Activated CD4-positive, alpha-beta memory T cell treated with anti-CD3 and anti-CD28 coated beads for 36 hours (primary cell): ENCODE measurements at regions of chr15 and their contacts with region 1.

Region 1: DNA sequence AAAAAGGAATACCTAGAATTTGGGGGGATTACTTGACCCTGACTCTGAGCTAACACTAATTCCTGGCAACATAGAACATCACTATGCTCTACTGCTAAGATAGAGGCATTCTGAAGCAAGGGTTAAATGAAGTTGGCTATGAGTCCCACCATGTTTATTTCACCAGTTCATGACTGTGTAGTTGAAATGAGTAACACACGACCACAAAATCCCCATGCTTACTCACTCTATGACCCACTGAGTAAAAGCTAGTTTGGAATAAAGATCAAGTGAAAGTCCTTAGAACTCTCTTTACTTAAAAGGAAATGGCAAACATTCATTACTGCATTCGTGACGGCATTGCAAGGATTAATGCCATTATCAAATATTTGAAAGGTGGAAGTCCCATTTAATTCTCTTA is 47.4 kb downstream of the MRPL46 start:
- DNase-seq: no peak
- H3K4me3 Mint-ChIP-seq: no peak overlapping the region
- H3K27ac Mint-ChIP-seq: no peak overlapping the region
- H3K4me1 Mint-ChIP-seq: peaks cover 16% of the 10 kb centered on the region
- H3K27me3 Mint-ChIP-seq: peaks cover 49% of the 10 kb centered on the region

Region 2: DNA sequence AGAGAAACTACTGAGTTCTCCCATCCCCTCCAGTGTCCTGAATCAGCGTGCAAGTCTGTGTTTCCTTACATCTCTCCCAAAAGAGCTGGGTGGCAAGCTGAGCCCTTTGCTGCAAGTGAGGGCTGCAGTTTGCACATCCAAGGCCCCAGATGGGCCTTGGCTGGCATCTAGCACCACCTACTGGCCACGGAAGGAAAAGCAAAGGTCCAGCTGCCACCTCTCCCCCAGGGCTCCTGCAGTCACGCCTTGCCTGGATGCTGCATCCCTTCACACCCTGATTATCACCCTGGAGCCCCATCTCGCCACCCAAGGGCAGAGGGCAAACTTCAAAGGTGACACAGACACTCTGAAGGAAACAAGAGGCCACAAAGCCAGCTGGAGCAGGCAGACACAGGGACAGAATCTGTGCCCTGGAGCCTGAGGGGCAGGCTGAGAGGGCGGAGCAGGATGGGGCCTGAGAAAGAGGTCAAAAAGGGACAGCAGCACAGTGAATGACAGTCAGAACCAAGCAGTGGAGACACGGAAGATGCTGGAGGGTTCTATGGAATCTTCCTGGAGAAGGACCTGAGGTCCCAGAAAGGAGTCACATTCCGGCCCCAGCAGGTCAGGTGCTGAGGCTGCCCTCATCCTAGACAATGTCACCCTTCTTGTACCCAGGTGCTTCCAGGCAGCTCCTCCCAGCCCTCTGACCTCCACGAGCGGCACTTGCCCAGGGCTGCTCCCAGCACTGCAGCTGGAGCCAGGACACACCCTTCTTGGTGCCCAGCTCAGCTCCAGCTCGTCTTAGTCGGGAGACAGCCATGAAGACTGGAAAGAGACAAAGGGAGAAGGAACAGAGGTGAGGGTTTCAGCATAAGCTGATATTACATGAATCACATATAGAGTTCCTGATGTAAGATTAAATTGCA is 145.0 kb before region 1 on chr15:
- CTCF ChIA-PET with region 1: no interaction called
- POLR2A ChIA-PET with region 1: no interaction called
- intact Hi-C with region 1: no loop called
- DNase-seq: peak; percentile 77
- H3K4me3 Mint-ChIP-seq: no peak overlapping the region
- H3K27ac Mint-ChIP-seq: no peak overlapping the region
- H3K4me1 Mint-ChIP-seq: no peaks in the 10 kb centered on the region
- H3K27me3 Mint-ChIP-seq: peaks cover 13% of the 10 kb centered on the region

Region 3: DNA sequence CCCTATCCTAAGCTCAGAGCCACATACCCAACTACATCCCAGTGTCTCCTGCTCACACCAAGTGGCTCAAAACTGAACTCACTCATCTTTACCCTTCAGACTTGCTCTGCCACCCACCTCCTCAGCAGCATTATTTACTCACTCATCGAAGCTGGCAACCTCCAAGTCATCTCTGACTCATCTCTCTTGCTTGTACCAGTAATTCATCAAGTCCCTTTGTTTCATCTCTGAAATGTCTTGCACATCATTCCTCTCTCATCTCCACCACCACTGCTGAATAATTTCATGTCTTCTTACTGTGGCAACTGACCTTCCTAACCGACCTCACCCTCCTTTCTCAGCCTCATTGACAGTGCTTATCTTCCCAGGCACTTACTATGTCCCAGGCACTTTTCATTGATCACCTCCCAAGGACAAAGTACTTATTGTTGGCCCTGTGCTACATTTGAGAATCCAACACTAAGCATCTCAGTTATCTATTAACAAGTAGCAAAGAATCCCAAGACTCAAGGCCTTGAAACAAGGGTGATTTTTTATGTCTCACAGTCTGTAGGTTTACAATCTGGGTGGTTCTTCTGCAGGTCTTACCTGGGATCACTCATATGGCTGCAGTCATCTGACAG is 34.6 kb before region 1 on chr15:
- CTCF ChIA-PET with region 1: interaction called, 3 read pairs
- POLR2A ChIA-PET with region 1: no interaction called
- intact Hi-C with region 1: loop called (anchors 1 kb)
- DNase-seq: peak; percentile 67
- H3K4me3 Mint-ChIP-seq: no peak overlapping the region
- H3K27ac Mint-ChIP-seq: peak overlapping the region; percentile 10
- H3K4me1 Mint-ChIP-seq: peaks cover 12% of the 10 kb centered on the region
- H3K27me3 Mint-ChIP-seq: peaks cover 35% of the 10 kb centered on the region

Region 4: GRCh38 chr15:88393719-88394519 is 25.9 kb before region 1 on chr15:
- CTCF ChIA-PET with region 1: no interaction called
- POLR2A ChIA-PET with region 1: interaction called, 4 read pairs
- intact Hi-C with region 1: loop called (anchors 2 kb)
- DNase-seq: no peak
- H3K4me3 Mint-ChIP-seq: no peak overlapping the region
- H3K27ac Mint-ChIP-seq: no peak overlapping the region
- H3K4me1 Mint-ChIP-seq: peaks cover 4% of the 10 kb centered on the region
- H3K27me3 Mint-ChIP-seq: peaks cover 33% of the 10 kb centered on the region

Region 5: GRCh38 chr15:88440021-88440420 is 20.2 kb after region 1 on chr15:
- CTCF ChIA-PET with region 1: no interaction called
- POLR2A ChIA-PET with region 1: no interaction called
- intact Hi-C with region 1: no loop called
- DNase-seq: no peak
- H3K4me3 Mint-ChIP-seq: no peak overlapping the region
- H3K27ac Mint-ChIP-seq: no peak overlapping the region
- H3K4me1 Mint-ChIP-seq: no peaks in the 10 kb centered on the region
- H3K27me3 Mint-ChIP-seq: peaks cover 29% of the 10 kb centered on the region